ENCODE measurements at regions of chr13 and their contacts with region 1.

Region 1: GRCh38 chr13:108322206-108322824 is 52.8 kb downstream of the TNFSF13B start:
- DNase-seq: no peak
- ATAC-seq: peak; percentile 93
- H3K4me3 ChIP-seq: no peak overlapping the region
- H3K27ac ChIP-seq: no peak overlapping the region
- H3K4me1 ChIP-seq: no peaks in the 10 kb centered on the region
- H3K27me3 ChIP-seq: no peaks in the 10 kb centered on the region
- CTCF ChIP-seq: peak; percentile 86

Region 2: GRCh38 chr13:108508263-108508662 is 185.9 kb after region 1 on chr13:
- intact Hi-C with region 1: no loop called
- DNase-seq: no peak
- ATAC-seq: peak; percentile 64
- H3K4me3 ChIP-seq: no peak overlapping the region
- H3K27ac ChIP-seq: no peak overlapping the region
- H3K4me1 ChIP-seq: no peaks in the 10 kb centered on the region
- H3K27me3 ChIP-seq: no peaks in the 10 kb centered on the region
- CTCF ChIP-seq: peak; percentile 57

Region 3: GRCh38 chr13:108895220-108895704 is 572.9 kb after region 1 on chr13:
- intact Hi-C with region 1: loop called (anchors 10 kb)
- DNase-seq: no peak
- ATAC-seq: no peak
- H3K4me3 ChIP-seq: no peak overlapping the region
- H3K27ac ChIP-seq: no peak overlapping the region
- H3K4me1 ChIP-seq: no peaks in the 10 kb centered on the region
- H3K27me3 ChIP-seq: peaks cover 6% of the 10 kb centered on the region
- CTCF ChIP-seq: peak; percentile 63

Measured in upper lobe of right lung (tissue), 1 donor.